Spleen (tissue), 13 donors: ENCODE measurements at regions of chr5 and their contacts with region 1.

Region 1: DNA sequence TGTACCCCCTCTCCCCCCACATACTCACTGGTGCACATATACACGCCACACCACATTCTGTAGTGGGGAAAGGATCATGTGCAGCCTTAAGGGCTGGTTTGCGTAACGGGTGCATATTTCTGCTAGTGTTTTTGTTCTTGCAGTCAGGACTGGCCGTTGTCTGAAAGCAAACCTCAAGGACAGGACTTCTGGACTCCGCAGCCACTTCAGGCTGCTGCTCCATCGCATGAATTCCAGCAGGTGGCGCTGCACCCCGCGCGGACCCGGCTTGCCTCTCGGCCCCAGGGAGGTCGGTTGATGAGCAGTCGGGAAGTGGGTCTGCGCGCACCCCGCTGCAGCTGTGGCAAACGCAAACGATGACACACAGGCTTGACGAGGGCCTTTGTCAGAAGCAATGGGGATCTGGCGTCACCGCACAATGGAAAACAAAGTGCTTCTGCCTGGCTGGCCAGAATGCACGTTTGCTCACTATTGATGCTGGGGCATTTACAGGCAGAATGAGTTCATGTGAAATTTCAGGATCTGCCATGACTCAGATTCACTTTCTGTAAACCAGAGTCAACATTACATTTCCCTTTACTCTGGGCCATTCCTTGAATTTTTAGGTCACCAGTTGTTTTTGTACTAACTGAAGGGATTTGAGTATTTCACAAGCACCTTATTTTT is 36.3 kb upstream of the GLRX start:
- DNase-seq: peak; percentile 98
- H3K4me3 ChIP-seq: peak overlapping the region in 4 of 8 donors; percentile 12 to 60 (median 16)
- H3K27ac ChIP-seq: peak overlapping the region in 4 of 8 donors; percentile 31 to 65 (median 50)
- H3K4me1 ChIP-seq: peaks cover 0 to 54% (median 37%) of the 10 kb centered on the region in 6 donors
- H3K27me3 ChIP-seq: no peaks in the 10 kb centered on the region
- CTCF ChIP-seq: peak; percentile 98 to 99 (median 98)
- POLR2A ChIP-seq: no peak

Region 2: GRCh38 chr5:95773335-95774059 is 85.3 kb before region 1 on chr5:
- intact Hi-C with region 1: no loop called
- DNase-seq: no peak
- H3K4me3 ChIP-seq: no peak overlapping the region
- H3K27ac ChIP-seq: peak overlapping the region in 2 of 8 donors; percentile 18 to 26
- H3K4me1 ChIP-seq: peaks cover 0 to 16% (median 1%) of the 10 kb centered on the region in 6 donors
- H3K27me3 ChIP-seq: no peaks in the 10 kb centered on the region
- CTCF ChIP-seq: no peak
- POLR2A ChIP-seq: no peak

Region 3: DNA sequence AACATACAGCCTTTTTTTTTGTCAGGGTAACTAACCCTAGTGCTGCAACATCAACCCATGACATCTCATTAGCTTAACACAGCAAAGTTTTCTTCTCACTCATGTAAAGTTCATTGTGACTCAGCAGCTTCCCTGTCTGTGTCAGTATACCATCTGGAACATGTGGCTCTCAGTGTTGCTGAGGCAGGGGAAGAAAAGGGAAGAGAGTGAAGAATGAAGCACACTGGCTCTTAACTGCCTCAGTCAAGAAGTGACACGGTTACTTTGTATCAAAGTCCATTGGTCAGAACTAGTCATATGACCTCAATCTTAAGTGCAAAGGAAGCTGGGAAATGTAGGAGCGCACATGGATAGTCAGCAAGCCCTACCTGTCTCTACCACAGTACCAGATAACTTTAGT is 287.9 kb after region 1 on chr5:
- intact Hi-C with region 1: no loop called
- DNase-seq: no peak
- H3K4me3 ChIP-seq: no peak overlapping the region
- H3K27ac ChIP-seq: no peak overlapping the region
- H3K4me1 ChIP-seq: no peaks in the 10 kb centered on the region
- H3K27me3 ChIP-seq: no peaks in the 10 kb centered on the region
- CTCF ChIP-seq: no peak
- POLR2A ChIP-seq: no peak

Region 4: DNA sequence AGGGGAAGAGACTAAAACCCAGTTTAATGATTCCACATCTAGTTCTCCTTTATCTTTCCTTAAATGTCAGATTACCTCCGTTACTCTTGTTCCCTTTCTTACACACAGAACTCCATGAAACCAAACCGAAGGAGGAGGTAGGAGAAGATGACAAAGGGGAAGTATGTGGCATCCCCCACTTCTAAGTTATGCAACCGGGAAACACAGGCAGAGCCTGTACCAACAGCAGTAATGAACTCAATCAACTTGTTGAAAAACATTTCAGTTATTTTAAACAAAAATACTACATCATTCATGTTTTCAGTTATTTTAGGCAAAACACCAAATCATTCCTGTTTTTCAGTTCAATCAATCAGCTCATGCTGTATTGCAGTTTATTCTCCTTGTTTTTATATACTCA is 472.4 kb after region 1 on chr5:
- intact Hi-C with region 1: loop called (anchors 5 kb)
- DNase-seq: no peak
- H3K4me3 ChIP-seq: no peak overlapping the region
- H3K27ac ChIP-seq: peak overlapping the region in 1 of 8 donors; percentile 2
- H3K4me1 ChIP-seq: peaks cover 0 to 20% (median 9%) of the 10 kb centered on the region in 6 donors
- H3K27me3 ChIP-seq: no peaks in the 10 kb centered on the region
- CTCF ChIP-seq: no peak
- POLR2A ChIP-seq: no peak